ENCODE measurements at regions of chr10 and their contacts with region 1.

Region 1: GRCh38 chr10:72048450-72049124 is 39.8 kb downstream of the SPOCK2 start:
- DNase-seq: peak; percentile 95
- H3K4me3 ChIP-seq: no peak overlapping the region
- H3K27ac ChIP-seq: no peak overlapping the region
- H3K4me1 ChIP-seq: no peaks in the 10 kb centered on the region
- H3K27me3 ChIP-seq: no peaks in the 10 kb centered on the region
- CTCF ChIP-seq: peak; percentile 100

Region 2: DNA sequence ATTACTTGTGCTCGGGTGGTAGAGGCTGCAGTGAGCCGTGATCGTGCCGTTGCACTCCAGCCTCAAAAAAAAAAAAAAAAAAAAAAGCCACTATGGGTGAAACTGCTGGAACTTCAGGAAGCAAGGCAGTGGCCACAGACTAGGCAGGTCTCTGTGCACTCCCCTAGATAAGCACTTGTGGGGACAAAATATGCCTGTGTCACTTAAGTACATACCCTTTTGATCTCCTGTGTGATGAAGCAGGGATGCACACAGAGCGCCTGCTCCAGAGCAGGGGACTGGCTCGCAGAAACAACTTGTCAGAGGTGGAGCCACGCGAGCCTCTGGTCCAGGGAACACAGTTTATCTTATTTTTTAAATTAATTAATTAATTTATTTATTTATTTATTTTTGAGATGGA is 154.7 kb before region 1 on chr10:
- intact Hi-C with region 1: loop called (anchors 2 kb)
- DNase-seq: no peak
- H3K4me3 ChIP-seq: no peak overlapping the region
- H3K27ac ChIP-seq: no peak overlapping the region
- H3K4me1 ChIP-seq: no peaks in the 10 kb centered on the region
- H3K27me3 ChIP-seq: no peaks in the 10 kb centered on the region
- CTCF ChIP-seq: no peak

Region 3: GRCh38 chr10:71957546-71958275 is 90.9 kb before region 1 on chr10:
- intact Hi-C with region 1: loop called (anchors 2 kb)
- DNase-seq: no peak
- H3K4me3 ChIP-seq: no peak overlapping the region
- H3K27ac ChIP-seq: no peak overlapping the region
- H3K4me1 ChIP-seq: no peaks in the 10 kb centered on the region
- H3K27me3 ChIP-seq: no peaks in the 10 kb centered on the region
- CTCF ChIP-seq: no peak

Region 4: DNA sequence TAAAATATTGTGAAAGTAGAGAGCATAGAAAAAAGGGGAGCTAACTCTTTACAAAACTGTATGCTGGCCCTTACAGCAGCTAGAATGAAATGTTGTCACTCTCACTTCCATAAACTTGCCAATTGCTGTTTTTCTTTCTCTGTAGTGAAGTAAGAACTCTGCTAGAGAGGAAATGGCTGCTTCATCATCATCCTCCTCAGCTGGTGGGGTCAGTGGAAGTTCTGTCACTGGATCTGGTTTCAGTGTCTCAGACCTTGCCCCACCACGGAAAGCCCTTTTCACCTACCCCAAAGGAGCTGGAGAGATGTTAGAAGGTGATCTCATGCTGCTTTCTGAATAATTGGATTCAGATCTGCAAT is 175.1 kb after region 1 on chr10:
- intact Hi-C with region 1: loop called (anchors 5 kb)
- DNase-seq: no peak
- H3K4me3 ChIP-seq: no peak overlapping the region
- H3K27ac ChIP-seq: no peak overlapping the region
- H3K4me1 ChIP-seq: peaks cover 9% of the 10 kb centered on the region
- H3K27me3 ChIP-seq: no peaks in the 10 kb centered on the region
- CTCF ChIP-seq: no peak

Region 5: DNA sequence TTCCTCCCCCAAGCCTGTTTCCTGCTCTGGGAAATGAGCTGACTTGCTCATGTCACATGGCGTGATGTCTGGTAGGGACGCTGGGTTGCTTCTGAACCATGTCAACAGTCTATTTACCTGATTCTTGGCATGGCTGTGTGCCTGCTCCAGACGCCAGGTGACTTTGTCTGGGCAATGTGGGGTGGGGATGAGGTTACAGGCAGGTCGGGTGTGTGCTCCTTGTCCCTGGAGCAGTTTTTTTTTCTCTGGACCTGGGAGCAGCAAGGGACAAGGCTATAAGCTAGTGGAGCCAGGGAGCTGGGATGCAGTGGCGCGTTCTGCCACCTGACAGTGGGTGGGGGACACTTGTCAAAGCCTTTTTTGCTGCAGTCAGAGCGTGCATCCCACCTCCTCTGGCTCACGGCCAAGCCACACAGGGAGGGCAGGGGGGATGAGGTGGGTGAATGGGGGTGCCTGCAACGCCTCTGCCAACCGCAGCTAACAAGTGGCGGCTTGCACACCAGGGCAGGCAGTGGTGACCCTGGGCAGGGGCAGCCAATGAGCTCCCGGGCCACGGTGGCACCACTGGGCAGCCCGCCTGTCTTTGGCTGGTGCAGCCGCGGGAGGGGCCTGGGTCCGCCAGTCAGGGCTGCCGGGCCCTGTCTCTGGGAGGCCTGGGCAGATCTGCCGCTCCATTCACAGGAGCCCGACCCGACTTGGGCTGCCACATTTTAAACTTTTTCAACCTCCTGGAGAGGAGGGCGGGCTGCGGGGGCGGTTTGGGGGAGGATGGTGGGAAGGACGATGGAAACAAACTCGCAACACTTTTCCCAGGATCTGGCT is 283.2 kb after region 1 on chr10:
- intact Hi-C with region 1: loop called (anchors 5 kb)
- DNase-seq: peak; percentile 87
- H3K4me3 ChIP-seq: no peak overlapping the region
- H3K27ac ChIP-seq: peak overlapping the region; percentile 86
- H3K4me1 ChIP-seq: peaks cover 20% of the 10 kb centered on the region
- H3K27me3 ChIP-seq: no peaks in the 10 kb centered on the region
- CTCF ChIP-seq: peak; percentile 20

Measured in colonic mucosa (tissue), 4 donors.